ENCODE measurements at regions of chr5 and their contacts with region 1.

Region 1: GRCh38 chr5:165173651-165174050 is 1668.2 kb downstream of the MAT2B start:
- DNase-seq: no peak
- H3K4me3 ChIP-seq: no peak overlapping the region
- H3K27ac ChIP-seq: no peak overlapping the region
- H3K4me1 ChIP-seq: no peaks in the 10 kb centered on the region
- CTCF ChIP-seq: no peak

Region 2: GRCh38 chr5:165227511-165227910 is 53.9 kb after region 1 on chr5:
- CTCF ChIA-PET with region 1: no interaction called
- POLR2A ChIA-PET with region 1: no interaction called
- intact Hi-C with region 1: loop called (anchors 2 kb)
- DNase-seq: no peak
- H3K4me3 ChIP-seq: no peak overlapping the region
- H3K27ac ChIP-seq: no peak overlapping the region
- H3K4me1 ChIP-seq: no peaks in the 10 kb centered on the region
- CTCF ChIP-seq: 0 out of 2 replicates have a peak, but pooled peaks have one; percentile 14

Region 3: DNA sequence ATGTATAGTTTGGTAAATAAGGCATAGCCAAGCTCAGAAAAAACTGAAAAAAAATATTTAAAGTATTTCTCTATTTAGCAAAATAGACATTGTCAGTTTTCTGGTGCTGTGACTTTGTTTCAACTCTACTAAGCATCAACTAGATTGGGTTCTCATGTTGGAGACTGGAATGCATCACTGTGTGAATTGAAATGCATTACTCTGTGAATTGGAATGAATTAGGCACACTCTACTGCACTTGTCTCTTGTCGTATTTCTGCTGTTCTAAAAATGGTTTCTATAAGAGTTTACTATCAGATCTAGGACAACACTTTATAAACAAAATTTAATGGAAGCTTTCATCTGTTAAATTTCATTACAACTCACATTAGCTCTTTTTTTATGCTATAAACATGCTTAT is 104.0 kb after region 1 on chr5:
- CTCF ChIA-PET with region 1: no interaction called
- POLR2A ChIA-PET with region 1: no interaction called
- intact Hi-C with region 1: no loop called
- DNase-seq: no peak
- H3K4me3 ChIP-seq: no peak overlapping the region
- H3K27ac ChIP-seq: no peak overlapping the region
- H3K4me1 ChIP-seq: no peaks in the 10 kb centered on the region
- CTCF ChIP-seq: no peak

Region 4: DNA sequence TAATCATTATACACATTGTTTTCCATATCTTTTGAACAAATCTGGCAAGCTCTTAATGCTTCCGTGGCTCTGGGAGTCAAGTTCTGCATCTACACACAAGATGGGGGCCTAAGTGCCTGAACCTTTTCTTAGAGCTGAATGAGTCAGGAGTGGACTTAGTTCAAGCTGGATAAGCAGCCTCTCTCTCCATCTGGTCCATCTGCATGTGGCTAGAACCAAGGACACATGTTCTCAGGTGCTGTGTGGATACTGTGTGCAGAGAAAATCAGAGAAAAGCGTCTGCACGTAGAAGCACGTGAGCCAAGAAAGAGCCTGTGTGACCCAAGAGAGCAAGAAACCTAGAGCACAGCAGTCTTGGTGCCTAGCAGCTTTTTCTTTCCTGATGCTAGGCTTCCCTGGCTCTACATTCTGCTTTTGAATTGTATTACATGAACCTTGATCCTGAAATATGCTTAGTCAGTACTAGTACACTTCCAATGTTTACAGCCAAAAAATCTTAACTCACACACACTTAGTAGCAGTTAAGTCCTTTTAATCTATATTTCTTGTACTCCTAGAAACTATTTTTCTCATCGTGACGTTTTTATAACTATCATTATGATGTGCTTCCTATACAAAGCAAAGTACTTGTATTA is 130.7 kb after region 1 on chr5:
- CTCF ChIA-PET with region 1: no interaction called
- POLR2A ChIA-PET with region 1: no interaction called
- intact Hi-C with region 1: no loop called
- DNase-seq: no peak
- H3K4me3 ChIP-seq: no peak overlapping the region
- H3K27ac ChIP-seq: no peak overlapping the region
- H3K4me1 ChIP-seq: no peaks in the 10 kb centered on the region
- CTCF ChIP-seq: no peak

Measured in OCI-LY7 (cell line).